Tibial artery (tissue), 4 donors: ENCODE measurements at regions of chr3 and their contacts with region 1.

Region 1: DNA sequence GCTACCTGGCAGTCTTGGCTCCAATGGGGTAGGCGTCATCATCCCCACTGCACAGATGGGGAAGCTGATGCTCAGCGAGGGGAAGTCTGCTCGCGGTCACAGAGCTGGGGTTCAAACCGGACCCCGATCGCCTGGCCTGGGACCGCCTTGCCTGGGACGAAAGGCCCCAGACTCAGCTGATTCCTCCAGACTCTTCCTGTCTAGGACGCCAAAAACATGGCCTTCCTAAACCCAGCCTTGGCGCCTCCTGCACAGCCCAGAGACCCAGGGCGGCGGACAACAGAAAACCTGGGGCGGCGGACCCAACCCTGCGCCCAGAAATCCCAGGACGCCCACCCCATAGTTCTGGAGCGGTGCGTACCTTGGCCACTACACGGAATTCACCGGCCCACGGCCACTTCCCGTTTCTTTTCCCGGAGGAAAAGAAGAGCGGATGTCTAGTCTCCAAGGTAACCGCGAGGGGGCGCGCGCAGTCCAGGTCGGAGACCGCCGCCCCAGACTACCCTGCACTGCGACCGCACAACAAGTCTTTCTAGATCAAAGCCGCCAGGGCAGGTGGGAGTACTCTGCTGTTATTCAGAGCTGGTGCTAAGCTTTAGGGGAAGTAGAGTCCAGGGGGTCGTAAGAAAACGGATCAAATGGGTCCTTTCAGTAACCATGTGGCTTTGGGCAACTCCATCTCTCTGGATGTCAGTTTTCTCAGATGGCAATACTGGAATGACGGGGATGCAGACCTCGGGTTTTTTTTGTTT is 4.9 kb upstream of the IL17RD start:
- DNase-seq: peak; percentile 46 to 80
- H3K4me3 ChIP-seq: peak overlapping the region; percentile 37 to 54
- H3K27ac ChIP-seq: no peak overlapping the region
- H3K4me1 ChIP-seq: peaks cover 0 to 17% (median 8%) of the 10 kb centered on the region in 4 donors
- H3K27me3 ChIP-seq: peaks cover 0 to 26% of the 10 kb centered on the region in 2 donors
- CTCF ChIP-seq: peak; percentile 70 to 82

Region 2: GRCh38 chr3:57227204-57227929 is 57.3 kb after region 1 on chr3 and contains the start of gene APPL1:
- intact Hi-C with region 1: loop called (anchors 10 kb)
- DNase-seq: peak; percentile 86 to 96
- H3K4me3 ChIP-seq: peak within 1 kb of the TSS; percentile 77 to 89
- H3K27ac ChIP-seq: peak within 1 kb of the TSS; percentile 88 to 92
- H3K4me1 ChIP-seq: peaks cover 0 to 38% (median 21%) of the 10 kb centered on the region in 4 donors
- H3K27me3 ChIP-seq: no peaks in the 10 kb centered on the region
- CTCF ChIP-seq: no peak